ENCODE measurements at regions of chr6 and their contacts with region 1.

Region 1: DNA sequence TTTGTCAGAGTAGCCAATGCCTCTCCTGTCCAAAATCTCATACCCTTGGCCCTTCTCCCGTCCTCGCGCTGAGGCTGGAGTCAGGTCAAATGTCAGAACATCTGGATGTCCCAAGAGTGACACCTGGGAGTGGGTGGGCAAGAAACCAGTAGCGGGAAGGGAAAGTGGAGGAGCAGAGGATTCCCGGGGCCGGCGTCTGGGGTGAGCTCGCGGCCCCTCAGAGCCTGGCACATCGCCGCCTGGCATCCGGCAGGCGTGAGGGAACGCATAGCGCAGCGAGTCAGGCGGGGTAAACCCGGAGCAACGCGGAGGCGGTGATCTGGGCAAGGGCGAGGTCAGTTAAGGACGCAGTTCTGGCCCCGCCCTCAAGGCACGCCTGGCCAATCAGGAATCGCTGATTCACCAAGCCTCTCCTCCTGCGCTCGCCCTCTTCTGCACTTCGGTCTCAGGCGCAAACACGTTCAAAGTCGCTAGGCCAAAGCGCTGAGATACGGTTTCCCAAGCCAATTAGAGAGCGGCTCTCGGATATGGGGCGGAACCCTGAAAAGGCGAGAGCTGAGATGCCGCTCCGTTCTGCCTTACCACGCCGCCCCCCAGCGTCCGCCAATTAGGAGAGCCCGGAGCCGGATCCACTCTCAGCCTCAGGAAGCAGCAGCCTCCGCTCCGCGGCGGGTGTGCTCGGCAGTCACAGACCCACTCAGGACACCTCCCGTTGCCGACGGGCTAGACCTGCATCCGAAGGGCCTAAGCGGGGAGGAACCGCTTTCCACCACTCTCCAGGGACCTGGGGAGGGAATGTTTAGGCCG is 22.5 kb downstream of the VPS52 start:
- DNase-seq: peak; percentile 99
- ATAC-seq: peak; percentile 93
- H3K4me3 ChIP-seq: peak overlapping the region; percentile 80 to 89 (median 86)
- H3K27ac ChIP-seq: peak overlapping the region; percentile 94
- H3K4me1 ChIP-seq: peaks cover 29% of the 10 kb centered on the region
- H3K27me3 ChIP-seq: no peaks in the 10 kb centered on the region; a peak in 1 of 5 replicates
- CTCF ChIP-seq: peak; percentile 74
- EP300 ChIP-seq: no peak
- POLR2A ChIP-seq: peak; percentile 90 to 91
- RAD21 ChIP-seq: peak; percentile 17; the same call in 1 of the 2 replicates

Region 2: DNA sequence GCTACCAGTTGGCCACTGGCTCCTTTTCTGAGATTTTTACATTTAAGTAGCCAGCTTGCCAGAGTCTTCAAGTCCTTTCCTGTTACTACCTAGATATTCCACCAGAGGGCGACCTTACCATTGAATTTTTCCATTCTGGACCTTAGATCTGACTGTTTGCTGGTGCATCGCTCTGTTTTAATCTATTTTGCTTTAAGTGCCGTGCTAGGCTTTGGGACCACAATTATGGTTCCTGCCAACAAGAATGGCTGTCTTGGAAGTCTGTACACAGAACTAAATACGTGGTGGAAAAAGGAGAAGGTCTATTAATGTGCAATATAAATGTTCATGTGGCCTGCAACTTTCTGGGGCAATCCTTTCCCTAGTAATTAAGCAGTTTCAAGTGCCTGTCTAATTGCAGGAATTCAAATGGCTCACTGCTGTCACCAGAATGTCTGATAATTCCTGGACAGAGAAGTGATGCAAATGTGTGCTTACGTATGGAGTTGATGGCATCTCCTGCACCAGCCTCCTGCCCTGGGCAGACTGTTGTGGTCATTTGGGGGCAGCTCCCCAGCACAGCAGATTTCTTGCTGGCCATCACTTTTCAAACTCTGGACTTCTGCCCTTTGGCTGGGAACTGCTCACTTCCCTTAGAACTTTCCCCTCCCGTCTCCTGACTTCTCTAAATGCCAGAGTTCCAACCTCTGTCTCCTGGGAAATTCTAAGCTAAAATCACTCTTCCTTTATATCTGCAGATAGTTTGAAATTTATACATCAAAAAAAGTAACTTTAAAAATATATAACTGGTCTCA is 234.1 kb before region 1 on chr6:
- CTCF ChIA-PET with region 1: interaction called, 9 read pairs
- POLR2A ChIA-PET with region 1: no interaction called
- in situ Hi-C with region 1: loop called (anchors 5 kb)
- intact Hi-C with region 1: loop called (anchors 2 kb)
- DNase-seq: peak; percentile 77
- ATAC-seq: peak; percentile 78
- H3K4me3 ChIP-seq: no peak overlapping the region
- H3K27ac ChIP-seq: no peak overlapping the region
- H3K4me1 ChIP-seq: no peaks in the 10 kb centered on the region
- H3K27me3 ChIP-seq: peaks cover 3 to 46% of the 10 kb centered on the region in 2 experiments; a peak in 3 of 5 replicates
- CTCF ChIP-seq: peak; percentile 80
- EP300 ChIP-seq: no peak
- POLR2A ChIP-seq: no peak
- RAD21 ChIP-seq: peak; percentile 65; the same call in 1 of the 2 replicates

Region 3: DNA sequence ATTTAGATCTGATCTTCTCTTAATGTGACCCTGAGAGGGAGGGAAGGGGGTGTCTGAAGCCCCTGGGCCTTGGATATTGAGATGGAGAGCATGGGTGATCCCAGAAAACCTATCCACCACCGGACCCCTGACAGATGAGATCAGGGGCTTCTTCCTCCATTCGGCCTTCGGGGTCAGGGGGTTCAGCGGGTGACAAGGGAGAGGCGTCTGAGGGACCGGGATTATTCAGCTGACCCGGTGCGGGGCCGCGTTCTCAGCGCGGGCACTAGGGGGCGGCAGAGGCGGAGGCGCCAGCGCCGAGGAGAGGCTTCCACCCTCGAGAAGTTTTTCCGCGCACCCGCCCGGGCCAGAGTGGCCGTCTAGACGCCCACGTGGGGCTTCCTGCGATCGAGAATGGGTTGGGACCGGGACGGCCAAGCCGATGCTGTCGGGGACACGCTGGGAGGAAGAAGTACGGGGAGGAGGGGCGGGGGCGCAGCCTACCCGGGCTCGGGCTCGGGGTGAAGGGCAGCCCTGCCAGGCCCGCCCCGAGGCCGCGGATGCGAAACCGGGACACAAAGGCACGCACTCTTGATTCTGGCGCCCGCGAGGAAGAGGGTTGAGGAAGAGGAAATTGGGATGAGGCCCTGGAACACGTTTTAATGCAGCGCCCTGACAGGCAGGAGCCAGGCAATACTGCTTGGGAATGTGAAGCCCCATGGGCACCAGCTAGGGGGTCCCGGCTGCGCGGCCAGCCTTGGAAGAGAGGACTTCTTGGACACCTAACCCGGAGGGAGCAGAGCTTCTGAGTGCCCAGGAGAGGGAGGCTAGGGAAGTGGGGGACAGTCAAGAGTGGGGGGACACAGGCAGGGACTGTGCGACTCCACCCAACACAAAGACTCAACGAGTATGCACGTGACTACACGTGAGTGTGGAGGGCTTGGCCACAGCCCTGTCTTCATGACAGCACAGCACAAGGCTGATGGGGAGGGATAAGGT is 87.5 kb before region 1 on chr6:
- CTCF ChIA-PET with region 1: interaction called, 16 read pairs
- POLR2A ChIA-PET with region 1: interaction called, 23 read pairs
- in situ Hi-C with region 1: loop called (anchors 5 kb)
- intact Hi-C with region 1: loop called (anchors 2 kb)
- DNase-seq: peak; percentile 23
- ATAC-seq: peak; percentile 84
- H3K4me3 ChIP-seq: peak overlapping the region; percentile 49 to 74 (median 56)
- H3K27ac ChIP-seq: no peak overlapping the region
- H3K4me1 ChIP-seq: peaks cover 54% of the 10 kb centered on the region
- H3K27me3 ChIP-seq: peaks cover 6 to 20% of the 10 kb centered on the region in 2 experiments; a peak in 4 of 5 replicates
- CTCF ChIP-seq: peak; percentile 96
- EP300 ChIP-seq: no peak
- POLR2A ChIP-seq: no peak
- RAD21 ChIP-seq: peak; percentile 83

Region 4: GRCh38 chr6:33208091-33208967 is 40.8 kb before region 1 on chr6 and contains the start of gene RING1:
- CTCF ChIA-PET with region 1: interaction called, 5 read pairs
- POLR2A ChIA-PET with region 1: interaction called, 33 read pairs
- in situ Hi-C with region 1: loop called (anchors 5 kb)
- intact Hi-C with region 1: no loop called
- DNase-seq: peak; percentile 59
- ATAC-seq: peak; percentile 30
- H3K4me3 ChIP-seq: peak within 1 kb of the TSS; percentile 90 to 93 (median 91)
- H3K27ac ChIP-seq: peak within 1 kb of the TSS; percentile 76
- H3K4me1 ChIP-seq: peaks cover 58% of the 10 kb centered on the region
- H3K27me3 ChIP-seq: peaks cover 0 to 1% of the 10 kb centered on the region in 2 experiments; a peak in 1 of 5 replicates
- CTCF ChIP-seq: peak; percentile 18; the same call in 1 of the 2 replicates
- EP300 ChIP-seq: no peak
- POLR2A ChIP-seq: peak in 1 of 2 experiments; percentile 78; a peak in 2 of 4 replicates
- RAD21 ChIP-seq: peak; percentile 44; the same call in 1 of the 2 replicates
- total RNA-seq, gene RING1: 19.8 and 23.9 TPM in 2 replicates

Region 5: GRCh38 chr6:33271458-33272274 is 22.5 kb after region 1 on chr6 and contains the starts of genes RPS18 and VPS52:
- CTCF ChIA-PET with region 1: no interaction called
- POLR2A ChIA-PET with region 1: interaction called, 94 read pairs
- in situ Hi-C with region 1: no loop called
- intact Hi-C with region 1: no loop called
- DNase-seq: peak; percentile 100
- ATAC-seq: peak; percentile 92
- H3K4me3 ChIP-seq: peak within 1 kb of the TSS; percentile 75 to 89 (median 82)
- H3K27ac ChIP-seq: peak within 1 kb of the TSS; percentile 95
- H3K4me1 ChIP-seq: peaks cover 48% of the 10 kb centered on the region
- H3K27me3 ChIP-seq: no peaks in the 10 kb centered on the region; a peak in 1 of 5 replicates
- CTCF ChIP-seq: no peak
- EP300 ChIP-seq: peak in 1 of 2 experiments; percentile 10; a peak in 1 of 4 replicates
- POLR2A ChIP-seq: peak; percentile 99
- RAD21 ChIP-seq: peak; percentile 42
- total RNA-seq, gene RPS18: 3,896 and 4,448 TPM in 2 replicates
- total RNA-seq, gene VPS52: 40.2 and 48.9 TPM in 2 replicates

Region 6: GRCh38 chr6:33299237-33299944 is 50.3 kb after region 1 on chr6:
- CTCF ChIA-PET with region 1: no interaction called
- POLR2A ChIA-PET with region 1: interaction called, 10 read pairs
- in situ Hi-C with region 1: no loop called
- intact Hi-C with region 1: no loop called
- DNase-seq: peak; percentile 88
- ATAC-seq: peak; percentile 73
- H3K4me3 ChIP-seq: peak overlapping the region; percentile 75 to 88 (median 79)
- H3K27ac ChIP-seq: peak overlapping the region; percentile 93
- H3K4me1 ChIP-seq: peaks cover 27% of the 10 kb centered on the region
- H3K27me3 ChIP-seq: no peaks in the 10 kb centered on the region; a peak in 1 of 5 replicates
- CTCF ChIP-seq: peak; percentile 98
- EP300 ChIP-seq: peak in 1 of 2 experiments; percentile 27; a peak in 1 of 4 replicates
- POLR2A ChIP-seq: peak; percentile 88 to 95
- RAD21 ChIP-seq: peak; percentile 74